Activated T-helper 1 cell treated with anti-CD3 and anti-CD28 coated beads, Interleukin-12 subunit alpha, Interleukin-12 subunit beta, Interleukin-2, Interleukin-4 antibody, amounts not matched to agents 30 ng/mL and 10 ng/mL and 1 ng/mL, durations not matched to agents 14 hours and 24 hours and 36 hours (primary cell): ENCODE measurements at regions of chr3 and their contacts with region 1.

Region 1: DNA sequence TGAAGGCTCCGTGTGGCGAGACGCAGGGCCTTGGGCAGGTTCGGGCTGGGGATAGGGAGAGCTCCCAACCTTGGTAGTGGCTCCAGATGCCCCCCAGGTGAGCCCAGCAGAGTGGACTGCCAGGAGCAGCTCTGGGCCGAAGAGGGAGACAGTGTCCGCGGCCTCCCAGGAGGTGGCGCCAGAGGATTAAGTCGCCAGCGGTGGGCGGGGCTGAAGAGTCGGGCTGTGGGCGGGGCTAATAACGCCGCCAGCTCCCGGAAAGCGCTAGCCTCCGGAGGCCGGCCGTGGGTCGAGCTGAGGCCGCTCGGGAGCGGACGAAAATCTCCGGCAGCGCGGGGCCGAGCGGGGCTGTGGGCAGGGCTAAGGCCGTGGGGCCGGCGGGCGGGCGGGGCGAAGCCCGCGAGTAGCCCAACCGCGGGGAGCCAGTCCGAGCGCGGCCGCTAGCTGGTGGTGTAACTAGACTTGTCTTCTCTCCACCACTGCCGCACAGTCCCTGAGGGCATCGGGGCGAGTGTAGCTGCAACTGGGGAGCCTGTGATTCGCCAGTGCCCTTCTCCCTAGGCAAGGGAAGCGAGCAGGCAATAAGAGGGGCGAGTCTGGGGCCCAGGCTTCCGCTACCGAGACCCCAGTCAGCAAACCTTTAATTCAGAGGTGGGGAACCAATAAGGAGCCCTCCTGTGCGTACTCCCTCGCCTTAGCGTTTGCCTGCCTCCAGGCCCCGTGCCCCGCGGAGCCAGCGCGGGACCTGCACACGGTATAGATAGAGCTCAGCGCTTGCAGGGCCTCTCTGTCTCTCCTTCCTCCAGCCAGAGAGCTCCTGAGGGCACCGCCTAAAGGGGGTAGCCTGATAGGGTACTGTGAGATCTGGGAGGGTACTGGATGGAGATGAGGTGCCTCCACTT is 14.4 kb upstream of the BSN start:
- DNase-seq: peak; percentile 85
- H3K4me3 Mint-ChIP-seq: peak overlapping the region; percentile 68
- H3K27ac Mint-ChIP-seq: no peak overlapping the region
- H3K4me1 Mint-ChIP-seq: peaks cover 5% of the 10 kb centered on the region
- H3K27me3 Mint-ChIP-seq: peaks cover 12% of the 10 kb centered on the region

Region 2: DNA sequence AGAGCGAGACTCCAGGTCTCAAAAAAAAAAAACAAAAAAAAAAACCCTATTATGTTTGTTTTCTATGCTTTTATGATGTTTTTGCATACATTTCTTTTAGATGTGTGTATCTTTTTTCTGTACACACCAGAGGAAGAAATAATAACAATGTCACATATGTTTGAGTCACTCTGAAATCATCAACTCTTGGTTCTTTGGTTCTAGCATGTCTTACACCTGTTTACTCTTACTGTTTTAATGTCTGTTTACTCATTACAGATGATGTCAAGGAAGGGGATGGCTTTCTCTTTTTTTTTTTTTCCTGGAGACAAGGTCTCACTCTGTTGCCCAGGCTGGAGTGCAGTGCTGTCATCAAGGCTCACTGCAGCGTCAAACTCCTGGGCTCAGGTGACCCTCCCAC is 152.2 kb before region 1 on chr3:
- intact Hi-C with region 1: no loop called
- DNase-seq: no peak
- H3K4me3 Mint-ChIP-seq: no peak overlapping the region
- H3K27ac Mint-ChIP-seq: no peak overlapping the region
- H3K4me1 Mint-ChIP-seq: peaks cover 25% of the 10 kb centered on the region
- H3K27me3 Mint-ChIP-seq: no peaks in the 10 kb centered on the region

Region 3: DNA sequence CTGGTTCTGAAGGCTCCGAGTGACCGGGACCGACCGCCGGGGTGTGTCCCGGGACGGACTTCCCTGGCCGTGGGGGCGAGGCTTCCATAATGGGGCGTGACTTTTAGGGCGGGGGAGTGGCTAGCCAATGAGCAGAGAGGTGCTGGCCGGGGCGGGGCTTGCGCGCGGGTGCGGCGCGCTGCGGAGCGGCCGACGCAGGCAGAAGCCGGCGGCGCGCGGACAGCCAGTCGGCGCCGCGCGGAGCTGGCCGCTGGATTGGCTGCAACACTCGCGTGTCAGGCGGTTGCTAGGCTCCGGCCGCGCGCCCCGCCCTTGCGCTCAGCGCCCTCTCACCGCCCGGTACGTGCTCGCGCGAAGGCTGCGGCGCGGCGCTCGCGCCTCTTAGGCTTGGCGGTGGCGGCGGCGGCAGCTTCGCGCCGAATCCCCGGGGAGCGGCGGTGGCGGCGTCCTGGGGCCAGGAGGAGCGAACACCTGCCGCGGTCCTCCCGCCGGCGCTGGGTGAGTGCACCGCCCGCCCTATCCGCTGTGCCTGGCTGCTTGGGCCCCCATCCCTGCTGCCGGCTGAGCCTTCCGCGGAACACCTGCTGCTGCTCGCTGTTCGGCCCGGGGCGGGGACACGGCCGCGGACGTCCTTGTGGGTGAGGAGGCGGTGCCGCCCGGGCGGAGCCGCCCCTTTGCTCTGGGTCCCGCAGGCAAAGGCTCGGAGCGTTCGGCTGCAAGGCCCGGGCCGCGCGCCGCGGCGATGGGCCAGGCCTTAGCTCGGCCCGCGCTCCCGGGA is 69.8 kb before region 1 on chr3 and contains the start of gene DAG1:
- intact Hi-C with region 1: loop called (anchors 2 kb)
- DNase-seq: peak; percentile 96
- H3K4me3 Mint-ChIP-seq: peak within 1 kb of the TSS; percentile 92
- H3K27ac Mint-ChIP-seq: peak within 1 kb of the TSS; percentile 88
- H3K4me1 Mint-ChIP-seq: peaks cover 23% of the 10 kb centered on the region
- H3K27me3 Mint-ChIP-seq: no peaks in the 10 kb centered on the region
- total RNA-seq, gene DAG1: 20.5 and 23.7 TPM in 2 replicates

Region 4: GRCh38 chr3:49553692-49554632 is 14.1 kb after region 1 on chr3 and contains the start of gene BSN:
- intact Hi-C with region 1: loop called (anchors 1 kb)
- DNase-seq: peak; percentile 82
- H3K4me3 Mint-ChIP-seq: peak within 1 kb of the TSS; percentile 89
- H3K27ac Mint-ChIP-seq: peak within 1 kb of the TSS; percentile 63
- H3K4me1 Mint-ChIP-seq: peaks cover 20% of the 10 kb centered on the region
- H3K27me3 Mint-ChIP-seq: peaks cover 54% of the 10 kb centered on the region
- total RNA-seq, gene BSN: 0.13 and 0.34 TPM in 2 replicates

Region 5: DNA sequence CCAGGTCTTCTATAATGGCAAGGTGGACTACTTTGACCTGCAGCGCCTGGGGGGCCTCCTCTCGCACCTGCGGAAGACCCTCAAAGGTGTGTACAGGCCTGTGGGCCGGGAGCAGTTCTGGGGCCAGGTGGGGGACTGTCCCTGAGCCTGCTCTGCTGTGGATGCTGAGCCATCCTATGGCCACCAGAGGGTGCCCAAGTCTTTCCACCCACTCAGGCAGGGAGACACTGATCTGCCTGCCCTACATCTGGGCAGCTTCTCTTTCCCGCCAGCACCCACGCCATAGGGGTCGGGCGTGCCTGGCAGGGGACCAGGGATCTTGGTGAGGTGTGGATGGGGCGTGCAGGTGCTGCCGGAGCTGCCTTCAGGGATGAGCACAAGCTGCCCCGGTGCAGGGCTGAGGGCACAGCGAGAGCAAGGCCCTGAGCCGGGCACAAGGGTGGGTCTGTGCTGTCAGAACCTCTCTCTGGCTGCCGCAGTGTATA is 163.6 kb after region 1 on chr3:
- intact Hi-C with region 1: loop called (anchors 1 kb)
- DNase-seq: peak; percentile 57
- H3K4me3 Mint-ChIP-seq: no peak overlapping the region
- H3K27ac Mint-ChIP-seq: no peak overlapping the region
- H3K4me1 Mint-ChIP-seq: no peaks in the 10 kb centered on the region
- H3K27me3 Mint-ChIP-seq: no peaks in the 10 kb centered on the region

Region 6: DNA sequence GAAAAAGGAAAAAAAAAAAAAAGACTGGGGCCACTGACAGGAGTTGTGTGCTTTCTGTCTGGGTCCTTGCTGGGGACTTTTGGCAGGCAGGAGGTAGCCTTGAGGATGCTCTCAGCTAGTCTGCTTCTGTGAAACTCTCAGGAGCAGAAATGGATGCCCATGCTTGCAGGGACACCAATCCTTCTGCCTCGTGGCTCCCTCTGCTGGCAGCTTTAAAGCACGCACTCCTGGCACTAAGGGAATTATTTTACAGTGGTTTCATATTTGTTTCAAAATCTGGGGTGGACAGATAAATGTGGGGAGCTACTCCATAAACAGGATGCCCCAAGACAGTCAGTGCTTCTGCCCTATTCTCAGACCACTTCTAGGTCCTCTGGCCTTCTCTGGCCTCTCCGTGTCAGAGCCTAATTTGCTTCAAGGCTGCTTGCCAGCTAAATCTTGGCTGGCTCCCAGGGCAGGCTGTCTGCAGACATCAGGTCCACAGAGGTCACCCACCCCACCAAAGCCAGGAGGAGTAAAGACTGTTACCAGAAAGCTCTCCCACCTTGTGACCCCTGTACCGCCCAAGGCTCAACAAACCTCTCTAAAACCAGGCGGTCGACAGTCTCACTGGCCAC is 299.4 kb after region 1 on chr3:
- intact Hi-C with region 1: loop called (anchors 1 kb)
- DNase-seq: peak; percentile 69
- H3K4me3 Mint-ChIP-seq: no peak overlapping the region
- H3K27ac Mint-ChIP-seq: no peak overlapping the region
- H3K4me1 Mint-ChIP-seq: no peaks in the 10 kb centered on the region
- H3K27me3 Mint-ChIP-seq: no peaks in the 10 kb centered on the region

Region 7: DNA sequence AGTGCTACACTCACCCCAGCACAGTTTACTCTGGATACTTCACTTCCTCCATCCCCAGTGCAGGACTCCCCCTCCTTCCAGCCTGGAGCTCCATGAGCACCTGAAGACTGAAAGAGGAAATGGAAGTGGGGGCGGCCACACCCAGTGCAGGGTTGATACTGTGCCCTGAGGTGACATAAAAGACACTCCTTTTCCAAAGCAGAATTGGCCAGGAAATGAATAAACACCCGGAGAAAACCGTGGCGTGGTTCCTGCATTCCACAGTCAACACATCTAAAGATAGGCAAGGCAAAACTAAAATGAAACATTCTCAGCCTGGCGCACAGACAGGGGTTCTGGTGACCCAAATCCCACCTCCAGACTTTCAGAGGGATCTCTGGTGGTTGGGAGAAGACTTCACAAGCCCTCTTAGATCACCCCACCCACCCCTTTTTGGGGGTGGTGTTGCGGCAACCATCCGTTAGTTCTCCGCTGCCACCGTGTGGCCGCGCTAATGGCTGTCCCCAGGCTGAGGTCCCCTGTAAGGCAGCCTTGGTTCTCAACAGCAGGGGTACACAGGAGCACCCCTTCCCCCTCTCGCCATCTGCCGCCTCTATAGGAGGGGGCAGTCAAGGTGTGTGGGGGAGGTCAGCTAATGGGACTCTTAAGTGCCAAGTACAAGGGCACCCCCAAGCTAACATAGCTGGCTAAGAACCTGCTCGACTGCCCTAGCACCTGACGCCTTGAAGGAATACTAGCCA is 366.3 kb after region 1 on chr3:
- intact Hi-C with region 1: loop called (anchors 5 kb)
- DNase-seq: peak; percentile 29
- H3K4me3 Mint-ChIP-seq: peak overlapping the region; percentile 16
- H3K27ac Mint-ChIP-seq: peak overlapping the region; percentile 57
- H3K4me1 Mint-ChIP-seq: peaks cover 32% of the 10 kb centered on the region
- H3K27me3 Mint-ChIP-seq: no peaks in the 10 kb centered on the region